GM12878 (cell line): ENCODE measurements at regions of chr3 and their contacts with region 1.

Region 1: GRCh38 chr3:160671231-160671630 is 5.7 kb upstream of the ARL14 start:
- DNase-seq: peak; percentile 59
- ATAC-seq: peak; percentile 96
- H3K4me3 ChIP-seq: no peak overlapping the region
- H3K27ac ChIP-seq: peak overlapping the region; percentile 66
- H3K4me1 ChIP-seq: peaks cover 4% of the 10 kb centered on the region
- H3K27me3 ChIP-seq: no peaks in the 10 kb centered on the region
- CTCF ChIP-seq: peak in 2 of 3 experiments; percentile 12 to 19; a peak in 2 of 6 replicates
- EP300 ChIP-seq: no peak
- POLR2A ChIP-seq: no peak
- RAD21 ChIP-seq: no peak

Region 2: DNA sequence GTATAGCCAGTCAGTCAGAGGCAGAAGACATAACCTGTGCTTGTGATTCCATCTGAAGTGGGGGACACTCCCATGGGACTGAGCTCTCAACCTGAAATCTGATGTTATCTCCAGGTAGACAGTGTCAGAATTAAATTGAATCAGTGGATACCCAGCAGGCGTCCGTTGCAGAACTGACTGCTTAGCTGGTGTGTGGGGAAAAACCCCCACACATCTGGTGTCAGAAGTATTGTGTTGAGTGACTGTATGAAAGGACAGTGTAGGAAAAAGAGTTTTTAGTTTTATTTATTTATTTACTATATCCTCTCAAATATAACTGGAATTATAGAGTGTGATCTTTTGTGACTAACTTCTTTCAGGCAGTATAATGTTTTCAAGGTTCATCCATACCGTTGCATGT is 116.3 kb before region 1 on chr3:
- CTCF ChIA-PET with region 1: no interaction called
- POLR2A ChIA-PET with region 1: no interaction called
- RAD21 ChIA-PET with region 1: no interaction called
- SMC1A ChIA-PET with region 1: no interaction called
- in situ Hi-C with region 1: no loop called
- intact Hi-C with region 1: no loop called
- DNase-seq: no peak
- ATAC-seq: peak; percentile 46
- H3K4me3 ChIP-seq: no peak overlapping the region
- H3K27ac ChIP-seq: no peak overlapping the region
- H3K4me1 ChIP-seq: no peaks in the 10 kb centered on the region
- H3K27me3 ChIP-seq: no peaks in the 10 kb centered on the region
- CTCF ChIP-seq: no peak
- EP300 ChIP-seq: no peak
- POLR2A ChIP-seq: no peak
- RAD21 ChIP-seq: no peak

Region 3: GRCh38 chr3:160565442-160566403 is 105.5 kb before region 1 on chr3 and contains the start of gene KPNA4:
- CTCF ChIA-PET with region 1: interaction called, 7 read pairs
- POLR2A ChIA-PET with region 1: interaction called, 4 read pairs
- RAD21 ChIA-PET with region 1: no interaction called
- SMC1A ChIA-PET with region 1: interaction called, 5 read pairs
- in situ Hi-C with region 1: no loop called
- intact Hi-C with region 1: loop called (anchors 1 kb)
- DNase-seq: peak; percentile 88
- ATAC-seq: peak; percentile 92
- H3K4me3 ChIP-seq: peak within 1 kb of the TSS; percentile 99
- H3K27ac ChIP-seq: peak within 1 kb of the TSS; percentile 83
- H3K4me1 ChIP-seq: peaks cover 7% of the 10 kb centered on the region; the same call in 1 of the 2 replicates
- H3K27me3 ChIP-seq: no peaks in the 10 kb centered on the region
- CTCF ChIP-seq: no peak
- EP300 ChIP-seq: no peak
- POLR2A ChIP-seq: peak; percentile 96
- RAD21 ChIP-seq: no peak
- polyA plus RNA-seq, gene KPNA4: 9.9 to 15.8 TPM

Region 4: GRCh38 chr3:160637081-160637480 is 34.1 kb before region 1 on chr3:
- CTCF ChIA-PET with region 1: no interaction called
- POLR2A ChIA-PET with region 1: no interaction called
- RAD21 ChIA-PET with region 1: no interaction called
- SMC1A ChIA-PET with region 1: no interaction called
- in situ Hi-C with region 1: no loop called
- intact Hi-C with region 1: no loop called
- DNase-seq: no peak
- ATAC-seq: no peak
- H3K4me3 ChIP-seq: no peak overlapping the region
- H3K27ac ChIP-seq: no peak overlapping the region
- H3K4me1 ChIP-seq: no peaks in the 10 kb centered on the region
- H3K27me3 ChIP-seq: no peaks in the 10 kb centered on the region
- CTCF ChIP-seq: no peak
- EP300 ChIP-seq: no peak
- POLR2A ChIP-seq: no peak
- RAD21 ChIP-seq: no peak

Region 5: GRCh38 chr3:160686955-160687535 is 15.8 kb after region 1 on chr3:
- CTCF ChIA-PET with region 1: interaction called, 16 read pairs
- POLR2A ChIA-PET with region 1: no interaction called
- RAD21 ChIA-PET with region 1: no interaction called
- SMC1A ChIA-PET with region 1: interaction called, 5 read pairs
- in situ Hi-C with region 1: no loop called
- intact Hi-C with region 1: no loop called
- DNase-seq: no peak
- ATAC-seq: peak; percentile 67
- H3K4me3 ChIP-seq: no peak overlapping the region
- H3K27ac ChIP-seq: no peak overlapping the region
- H3K4me1 ChIP-seq: no peaks in the 10 kb centered on the region
- H3K27me3 ChIP-seq: no peaks in the 10 kb centered on the region
- CTCF ChIP-seq: peak; percentile 23 to 45 (median 29); a peak in 4 of 6 replicates
- EP300 ChIP-seq: no peak
- POLR2A ChIP-seq: no peak
- RAD21 ChIP-seq: peak; percentile 30; the same call in 1 of the 2 replicates

Region 6: DNA sequence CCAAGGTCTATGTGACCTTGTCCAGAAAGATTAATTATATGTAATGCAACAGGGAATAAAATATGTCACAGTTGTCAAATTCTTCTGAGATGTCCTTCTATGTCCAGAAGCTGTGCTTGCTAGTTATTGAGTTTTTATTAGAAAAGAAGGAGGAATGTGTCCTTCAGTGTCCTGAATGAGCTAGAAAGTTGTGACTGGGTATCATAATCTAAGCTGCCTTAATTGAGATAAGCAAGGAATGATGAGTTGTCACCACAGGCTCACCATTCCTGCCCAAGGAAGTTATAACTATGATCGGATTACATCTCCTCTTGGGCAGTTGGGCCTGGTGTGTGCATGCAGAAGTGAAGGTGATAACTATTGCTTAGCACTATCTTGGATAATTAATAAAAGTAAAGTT is 27.6 kb after region 1 on chr3:
- CTCF ChIA-PET with region 1: no interaction called
- POLR2A ChIA-PET with region 1: no interaction called
- RAD21 ChIA-PET with region 1: no interaction called
- SMC1A ChIA-PET with region 1: no interaction called
- in situ Hi-C with region 1: no loop called
- intact Hi-C with region 1: no loop called
- DNase-seq: no peak
- ATAC-seq: no peak
- H3K4me3 ChIP-seq: no peak overlapping the region
- H3K27ac ChIP-seq: no peak overlapping the region
- H3K4me1 ChIP-seq: no peaks in the 10 kb centered on the region
- H3K27me3 ChIP-seq: no peaks in the 10 kb centered on the region
- CTCF ChIP-seq: no peak
- EP300 ChIP-seq: no peak
- POLR2A ChIP-seq: no peak
- RAD21 ChIP-seq: no peak